ENCODE measurements at regions of chr2 and their contacts with region 1.

Region 1: GRCh38 chr2:32946314-32947075 is at the start of gene LTBP1:
- DNase-seq: peak; percentile 92
- H3K4me3 Mint-ChIP-seq: peak within 1 kb of the TSS; percentile 83
- H3K27ac Mint-ChIP-seq: no peak within 1 kb of the TSS
- H3K4me1 Mint-ChIP-seq: peaks cover 2% of the 10 kb centered on the region
- H3K27me3 Mint-ChIP-seq: peaks cover 29% of the 10 kb centered on the region
- total RNA-seq, gene LTBP1: 0.14 and 0.21 TPM in 2 replicates

Region 2: DNA sequence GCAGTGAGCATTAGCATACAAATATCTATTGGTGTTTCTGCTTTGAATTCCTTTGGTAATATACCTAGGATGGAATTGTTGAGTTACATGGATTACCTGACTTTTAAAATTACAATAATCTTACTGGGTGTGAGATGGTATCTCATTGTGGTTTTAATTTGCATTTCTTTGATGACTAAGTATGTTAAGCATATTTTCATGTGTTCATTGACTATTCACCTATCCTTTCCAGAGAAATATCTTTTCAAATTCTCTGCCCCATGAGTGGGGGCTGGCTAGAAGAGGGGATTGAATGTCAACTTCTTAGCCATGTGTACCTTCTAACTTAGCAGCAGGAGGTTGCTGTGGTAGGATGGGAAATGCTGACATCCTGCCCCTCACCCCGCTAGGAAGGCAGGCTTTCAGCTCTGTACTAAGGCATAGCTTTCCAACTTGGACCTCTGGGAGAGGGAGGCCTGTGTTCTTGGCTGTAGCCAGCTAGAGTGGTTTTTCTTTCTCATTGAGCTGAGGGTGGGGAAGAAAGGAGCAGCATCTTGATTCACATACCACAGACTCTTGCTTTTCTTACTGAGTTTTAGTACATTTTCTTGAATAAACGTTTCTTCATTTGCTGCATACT is 382.0 kb before region 1 on chr2:
- intact Hi-C with region 1: loop called (anchors 5 kb)
- DNase-seq: no peak
- H3K4me3 Mint-ChIP-seq: no peak overlapping the region
- H3K27ac Mint-ChIP-seq: peak overlapping the region; percentile 53
- H3K4me1 Mint-ChIP-seq: peaks cover 9% of the 10 kb centered on the region
- H3K27me3 Mint-ChIP-seq: no peaks in the 10 kb centered on the region

Region 3: GRCh38 chr2:32627814-32628579 is 318.5 kb before region 1 on chr2 and contains the start of gene TTC27:
- intact Hi-C with region 1: loop called (anchors 1 kb)
- DNase-seq: peak; percentile 99
- H3K4me3 Mint-ChIP-seq: peak within 1 kb of the TSS; percentile 86
- H3K27ac Mint-ChIP-seq: peak within 1 kb of the TSS; percentile 91
- H3K4me1 Mint-ChIP-seq: peaks cover 24% of the 10 kb centered on the region
- H3K27me3 Mint-ChIP-seq: no peaks in the 10 kb centered on the region
- total RNA-seq, gene TTC27: 40.8 and 46.8 TPM in 2 replicates

Region 4: DNA sequence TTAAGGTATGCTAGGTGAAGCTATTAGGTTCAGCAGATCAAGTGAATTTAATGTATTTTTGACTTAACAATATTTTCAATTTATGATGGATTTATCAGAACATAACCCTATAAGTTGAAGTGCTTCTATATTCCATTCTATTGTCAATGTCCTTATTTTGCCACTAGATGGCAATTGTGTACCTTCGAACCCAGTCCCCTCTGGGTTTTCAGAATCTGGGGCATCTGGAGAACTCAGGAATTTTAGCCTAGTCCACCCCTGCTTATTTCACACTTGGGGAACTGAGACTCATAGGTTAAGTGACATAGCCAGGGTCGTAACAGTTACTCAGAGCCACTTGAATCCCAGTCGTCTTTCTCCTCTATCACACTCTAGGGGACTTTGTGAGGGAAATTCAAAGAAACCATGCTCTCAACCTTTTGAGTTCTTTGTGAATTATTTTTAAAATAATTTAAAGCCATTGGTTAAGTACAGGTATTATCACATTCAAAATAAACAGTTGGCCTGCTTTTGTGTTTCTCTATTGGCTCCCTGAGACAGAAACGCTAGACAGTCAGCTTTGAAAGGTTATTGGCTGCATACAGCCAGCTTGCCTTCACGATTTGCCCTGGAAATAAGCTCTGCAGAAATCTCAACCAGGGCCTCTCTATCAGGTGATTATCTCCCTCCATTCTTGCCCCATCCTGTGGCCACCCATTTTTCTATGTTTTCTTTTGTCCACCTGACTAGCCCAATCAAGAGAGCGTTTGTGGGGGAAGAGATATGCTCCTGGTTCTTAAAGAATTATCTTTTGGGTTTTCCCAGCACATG is 173.7 kb before region 1 on chr2:
- intact Hi-C with region 1: loop called (anchors 5 kb)
- DNase-seq: no peak
- H3K4me3 Mint-ChIP-seq: no peak overlapping the region
- H3K27ac Mint-ChIP-seq: no peak overlapping the region
- H3K4me1 Mint-ChIP-seq: peaks cover 2% of the 10 kb centered on the region
- H3K27me3 Mint-ChIP-seq: no peaks in the 10 kb centered on the region

Measured in activated CD4-positive, alpha-beta T cell treated with anti-CD3 and anti-CD28 coated beads, Interleukin-2, amount 10 ng/mL, durations not matched to agents 24 days and 14 days (primary cell).